ENCODE measurements at regions of chr11 and their contacts with region 1.

Region 1: DNA sequence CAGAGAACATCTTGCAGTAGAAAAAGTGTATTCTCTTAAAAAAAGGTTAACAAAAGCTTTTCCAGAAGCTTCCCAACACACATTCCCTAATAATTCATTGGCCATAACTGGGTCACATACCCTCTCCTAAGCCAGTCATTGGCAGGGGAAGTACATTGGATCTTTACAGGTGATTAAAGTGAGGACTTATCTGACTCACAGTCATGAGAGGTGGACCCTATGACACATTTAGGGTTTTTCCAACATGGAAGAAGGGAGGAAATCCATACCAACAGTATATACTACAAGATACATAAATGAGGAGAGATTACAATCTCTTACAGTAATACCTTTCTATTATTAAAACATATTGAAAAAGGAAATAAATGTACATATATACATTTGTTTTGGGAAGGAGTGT is 72.2 kb downstream of the CCDC73 start:
- DNase-seq: no peak
- ATAC-seq: no peak
- H3K4me3 ChIP-seq: no peak overlapping the region
- H3K27ac ChIP-seq: no peak overlapping the region
- H3K4me1 ChIP-seq: no peaks in the 10 kb centered on the region
- H3K27me3 ChIP-seq: no peaks in the 10 kb centered on the region
- CTCF ChIP-seq: no peak
- POLR2A ChIP-seq: no peak
- RAD21 ChIP-seq: no peak

Region 2: GRCh38 chr11:32400196-32400595 is 322.1 kb before region 1 on chr11:
- CTCF ChIA-PET with region 1: no interaction called
- POLR2A ChIA-PET with region 1: no interaction called
- RAD21 ChIA-PET with region 1: no interaction called
- intact Hi-C with region 1: no loop called
- DNase-seq: no peak
- ATAC-seq: no peak
- H3K4me3 ChIP-seq: no peak overlapping the region
- H3K27ac ChIP-seq: no peak overlapping the region
- H3K4me1 ChIP-seq: no peaks in the 10 kb centered on the region
- H3K27me3 ChIP-seq: peaks cover 7% of the 10 kb centered on the region; the same call in 1 of the 2 replicates
- CTCF ChIP-seq: no peak
- POLR2A ChIP-seq: no peak
- RAD21 ChIP-seq: no peak

Region 3: DNA sequence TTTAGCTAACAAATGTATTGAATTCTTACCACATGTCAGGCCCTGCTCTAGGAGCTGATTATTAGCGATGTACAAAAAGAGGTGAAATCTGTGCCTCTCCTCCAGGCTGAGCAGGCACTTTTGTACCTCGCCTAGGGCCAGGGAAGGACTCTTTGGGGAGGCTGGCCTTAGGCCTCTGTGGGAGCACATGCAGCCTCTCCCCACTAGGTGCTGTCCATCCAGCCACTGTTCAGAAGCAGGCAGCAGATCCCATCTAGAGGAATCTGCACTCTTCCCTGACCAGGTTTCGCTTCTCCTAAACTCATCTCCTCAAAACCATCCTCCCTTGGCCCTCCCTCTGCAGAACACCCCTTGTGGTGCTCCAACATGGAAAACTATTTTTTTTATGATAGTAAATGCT is 235.0 kb before region 1 on chr11:
- CTCF ChIA-PET with region 1: no interaction called
- POLR2A ChIA-PET with region 1: no interaction called
- RAD21 ChIA-PET with region 1: no interaction called
- intact Hi-C with region 1: loop called (anchors 5 kb)
- DNase-seq: peak; percentile 13
- ATAC-seq: peak; percentile 97
- H3K4me3 ChIP-seq: no peak overlapping the region
- H3K27ac ChIP-seq: no peak overlapping the region
- H3K4me1 ChIP-seq: peaks cover 0 to 4% of the 10 kb centered on the region in 2 experiments; a peak in 1 of 4 replicates
- H3K27me3 ChIP-seq: no peaks in the 10 kb centered on the region
- CTCF ChIP-seq: peak in 2 of 3 experiments; percentile 47 to 56; a peak in 4 of 6 replicates
- POLR2A ChIP-seq: no peak
- RAD21 ChIP-seq: peak; percentile 8; the same call in 1 of the 2 replicates